ENCODE measurements at regions of chr22 and their contacts with region 1.

Region 1: DNA sequence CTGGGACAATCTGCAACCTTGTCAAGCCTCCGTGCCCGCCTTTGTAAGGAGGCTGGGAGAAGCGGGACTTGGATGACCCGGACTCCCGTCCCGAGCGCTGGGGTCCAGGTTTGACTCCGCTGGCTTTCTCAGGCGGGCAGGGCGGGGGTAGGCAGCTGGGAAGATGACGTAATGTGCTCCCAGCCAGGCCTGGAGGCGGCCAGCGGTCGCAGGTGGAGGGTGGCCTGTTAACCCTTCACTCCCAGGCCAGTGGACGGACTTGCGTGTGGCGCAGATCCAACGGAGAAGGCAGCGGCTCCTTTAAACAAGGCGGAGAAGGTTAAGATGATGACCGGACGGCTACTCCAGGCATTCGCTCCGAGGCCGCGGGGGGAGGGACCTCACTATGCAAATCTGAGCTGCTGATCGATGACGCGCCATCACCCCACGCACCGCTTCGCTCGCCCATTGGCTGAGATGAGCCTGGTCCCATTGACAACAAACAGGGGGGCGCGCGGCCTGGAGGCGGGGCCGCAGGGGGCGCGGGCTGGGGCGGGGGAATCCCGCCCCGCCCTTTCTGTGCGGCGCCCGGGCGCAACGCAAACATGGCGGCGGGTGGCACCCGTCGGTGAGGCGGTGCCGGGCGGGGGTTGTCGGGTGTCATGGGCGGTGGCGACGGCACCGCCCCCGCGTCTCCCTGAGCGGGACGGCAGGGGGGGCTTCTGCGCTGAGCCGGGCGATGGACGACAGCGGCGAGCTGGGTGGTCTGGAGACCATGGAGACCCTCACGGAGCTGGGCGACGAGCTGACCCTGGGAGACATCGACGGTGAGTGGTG is at the start of gene SREBF2:
- DNase-seq: peak; percentile 93 to 99 (median 97)
- ATAC-seq: peak; percentile 96
- H3K4me3 ChIP-seq: peak within 1 kb of the TSS; percentile 99
- H3K4me3 Mint-ChIP-seq: peak within 1 kb of the TSS; percentile 90 to 98 (median 95)
- H3K27ac ChIP-seq: peak within 1 kb of the TSS; percentile 97
- H3K27ac Mint-ChIP-seq: peak within 1 kb of the TSS; percentile 94 to 100 (median 99)
- H3K4me1 ChIP-seq: peaks cover 0 to 10% of the 10 kb centered on the region in 2 donors
- H3K4me1 Mint-ChIP-seq: peaks cover 15 to 54% (median 30%) of the 10 kb centered on the region in 7 donors
- H3K27me3 ChIP-seq: no peaks in the 10 kb centered on the region
- H3K27me3 Mint-ChIP-seq: peaks cover 0 to 2% (median 0%) of the 10 kb centered on the region in 5 donors
- total RNA-seq, gene SREBF2: 71.5 to 117 (median 101) TPM

Region 2: GRCh38 chr22:41780746-41781505 is 51.8 kb before region 1 on chr22:
- CTCF ChIA-PET with region 1: no interaction called
- POLR2A ChIA-PET with region 1: interaction called, 52 read pairs
- intact Hi-C with region 1: loop called (anchors 1 to 2 kb)
- DNase-seq: peak; percentile 64 to 99 (median 96)
- ATAC-seq: peak; percentile 97
- H3K4me3 ChIP-seq: peak overlapping the region; percentile 67
- H3K4me3 Mint-ChIP-seq: peak overlapping the region; percentile 77 to 93 (median 89)
- H3K27ac ChIP-seq: peak overlapping the region; percentile 88
- H3K27ac Mint-ChIP-seq: peak overlapping the region; percentile 98 to 100 (median 100)
- H3K4me1 ChIP-seq: peaks cover 19 to 25% of the 10 kb centered on the region in 2 donors
- H3K4me1 Mint-ChIP-seq: peaks cover 32 to 71% (median 51%) of the 10 kb centered on the region in 7 donors
- H3K27me3 ChIP-seq: no peaks in the 10 kb centered on the region
- H3K27me3 Mint-ChIP-seq: no peaks in the 10 kb centered on the region

Region 3: DNA sequence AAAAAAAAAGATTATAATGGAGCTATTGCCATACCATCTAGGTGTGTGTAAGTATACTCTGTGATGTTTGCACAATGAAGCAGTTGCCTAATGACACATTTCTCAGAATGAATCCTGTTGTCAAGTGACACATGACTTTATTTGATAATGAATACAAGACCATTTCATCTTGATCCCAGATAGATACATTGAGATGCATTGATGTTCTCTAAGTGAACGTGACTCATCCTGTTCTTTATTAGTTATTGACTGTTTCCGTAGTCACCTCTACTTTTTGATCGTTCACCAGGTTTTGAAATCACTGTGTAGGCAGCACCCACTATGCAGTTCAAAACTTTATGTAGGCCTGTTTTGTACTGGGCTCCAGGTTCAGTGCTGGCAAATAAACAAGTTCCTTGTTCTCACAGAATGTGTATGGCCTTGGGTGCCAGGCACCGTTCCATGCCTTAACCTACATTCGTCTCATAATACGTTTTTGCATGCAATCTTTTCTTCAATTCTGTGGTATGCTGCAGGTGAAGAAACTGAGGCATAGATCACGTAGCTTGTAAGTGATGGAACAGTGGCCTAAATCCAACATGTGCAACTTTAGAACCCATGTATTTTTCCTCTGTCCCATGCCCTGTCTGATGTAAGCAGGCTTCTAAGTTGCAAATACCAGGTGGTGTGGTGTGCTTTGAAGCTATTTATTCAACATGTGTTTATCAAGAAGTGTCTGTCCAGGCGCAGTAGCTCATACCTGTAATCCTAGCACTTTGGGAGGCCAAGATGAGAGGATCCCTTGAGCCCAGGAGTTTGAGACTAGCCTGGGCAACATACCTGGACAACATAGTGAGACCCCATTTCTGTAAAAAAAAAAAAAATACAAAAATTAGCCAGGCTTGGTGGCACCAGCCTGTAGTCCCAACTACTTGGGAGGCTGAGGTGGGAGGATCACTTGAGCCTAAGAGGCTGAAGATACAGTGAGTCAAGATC is 10.5 kb after region 1 on chr22:
- CTCF ChIA-PET with region 1: no interaction called
- POLR2A ChIA-PET with region 1: interaction called, 22 read pairs
- intact Hi-C with region 1: no loop called
- DNase-seq: peak in 1 of 9 donors; percentile 30
- ATAC-seq: no peak
- H3K4me3 ChIP-seq: no peak overlapping the region
- H3K4me3 Mint-ChIP-seq: peak overlapping the region in 1 of 10 donors; percentile 23
- H3K27ac ChIP-seq: no peak overlapping the region
- H3K27ac Mint-ChIP-seq: peak overlapping the region in 4 of 9 donors; percentile 2 to 60 (median 27)
- H3K4me1 ChIP-seq: peaks cover 2 to 13% of the 10 kb centered on the region in 2 donors
- H3K4me1 Mint-ChIP-seq: peaks cover 38 to 82% (median 71%) of the 10 kb centered on the region in 7 donors
- H3K27me3 ChIP-seq: no peaks in the 10 kb centered on the region
- H3K27me3 Mint-ChIP-seq: no peaks in the 10 kb centered on the region

Region 4: GRCh38 chr22:41888627-41889200 is 56.0 kb after region 1 on chr22:
- CTCF ChIA-PET with region 1: no interaction called
- POLR2A ChIA-PET with region 1: no interaction called
- intact Hi-C with region 1: no loop called
- DNase-seq: no peak
- ATAC-seq: no peak
- H3K4me3 ChIP-seq: no peak overlapping the region
- H3K4me3 Mint-ChIP-seq: no peak overlapping the region
- H3K27ac ChIP-seq: no peak overlapping the region
- H3K27ac Mint-ChIP-seq: no peak overlapping the region
- H3K4me1 ChIP-seq: no peaks in the 10 kb centered on the region
- H3K4me1 Mint-ChIP-seq: peaks cover 0 to 6% (median 0%) of the 10 kb centered on the region in 7 donors
- H3K27me3 ChIP-seq: no peaks in the 10 kb centered on the region
- H3K27me3 Mint-ChIP-seq: no peaks in the 10 kb centered on the region

Region 5: DNA sequence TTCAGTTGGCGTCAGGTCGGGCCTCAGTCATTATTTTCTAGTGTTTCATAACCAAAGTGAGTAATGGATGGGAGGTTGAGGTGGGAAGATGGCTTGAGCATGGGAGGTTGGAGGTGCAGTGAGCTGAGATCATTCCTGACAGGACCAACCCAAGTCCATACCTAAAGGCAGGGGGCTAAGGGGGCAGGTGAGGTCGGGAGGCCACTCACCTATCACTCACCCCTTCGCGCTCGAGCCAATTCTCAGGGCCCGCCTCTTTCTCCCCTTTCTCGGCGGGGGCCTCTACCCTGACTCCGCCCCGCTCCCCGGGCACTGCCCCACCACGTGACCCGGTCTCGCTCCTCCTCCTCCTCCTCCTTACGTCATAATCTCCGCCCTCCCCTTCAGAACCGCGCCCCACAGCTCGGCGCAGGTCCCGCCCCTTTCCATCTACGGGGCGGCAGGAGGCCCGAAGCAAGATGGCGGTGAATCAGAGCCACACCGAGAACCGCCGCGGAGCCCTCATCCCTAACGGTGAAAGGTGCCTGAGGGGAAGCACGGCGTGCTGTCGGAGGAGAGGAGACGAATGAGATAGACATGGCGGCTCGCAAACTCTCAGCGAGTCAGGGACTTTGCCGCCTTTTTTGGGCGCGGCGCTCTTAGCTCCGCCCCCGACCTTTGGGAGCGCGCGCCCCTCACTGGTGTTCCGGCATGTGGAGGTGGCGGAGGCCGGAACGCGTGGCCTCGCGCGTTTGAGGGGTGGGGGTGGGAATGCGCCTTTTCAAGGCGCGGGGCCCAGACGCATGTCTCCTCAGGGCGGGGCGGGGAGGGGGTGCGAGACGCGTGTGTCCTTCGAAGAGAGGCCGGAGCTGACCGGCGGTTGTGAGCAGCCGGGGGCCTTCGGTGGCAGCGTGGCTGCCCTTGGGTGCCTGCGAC is 165.9 kb after region 1 on chr22 and contains the start of gene WBP2NL:
- CTCF ChIA-PET with region 1: no interaction called
- POLR2A ChIA-PET with region 1: no interaction called
- intact Hi-C with region 1: loop called in 1 of 2 experiments (anchors 1 kb)
- DNase-seq: peak; percentile 75 to 92 (median 89)
- ATAC-seq: peak; percentile 99
- H3K4me3 ChIP-seq: peak within 1 kb of the TSS; percentile 76
- H3K4me3 Mint-ChIP-seq: peak within 1 kb of the TSS; percentile 91 to 100 (median 96)
- H3K27ac ChIP-seq: peak within 1 kb of the TSS; percentile 73
- H3K27ac Mint-ChIP-seq: peak within 1 kb of the TSS; percentile 91 to 99 (median 96)
- H3K4me1 ChIP-seq: peaks cover 6 to 7% of the 10 kb centered on the region in 2 donors
- H3K4me1 Mint-ChIP-seq: peaks cover 12 to 31% (median 22%) of the 10 kb centered on the region in 7 donors
- H3K27me3 ChIP-seq: no peaks in the 10 kb centered on the region
- H3K27me3 Mint-ChIP-seq: peaks cover 0 to 9% (median 0%) of the 10 kb centered on the region in 5 donors
- total RNA-seq, gene WBP2NL: 0.85 to 5.7 (median 3.2) TPM

Region 6: DNA sequence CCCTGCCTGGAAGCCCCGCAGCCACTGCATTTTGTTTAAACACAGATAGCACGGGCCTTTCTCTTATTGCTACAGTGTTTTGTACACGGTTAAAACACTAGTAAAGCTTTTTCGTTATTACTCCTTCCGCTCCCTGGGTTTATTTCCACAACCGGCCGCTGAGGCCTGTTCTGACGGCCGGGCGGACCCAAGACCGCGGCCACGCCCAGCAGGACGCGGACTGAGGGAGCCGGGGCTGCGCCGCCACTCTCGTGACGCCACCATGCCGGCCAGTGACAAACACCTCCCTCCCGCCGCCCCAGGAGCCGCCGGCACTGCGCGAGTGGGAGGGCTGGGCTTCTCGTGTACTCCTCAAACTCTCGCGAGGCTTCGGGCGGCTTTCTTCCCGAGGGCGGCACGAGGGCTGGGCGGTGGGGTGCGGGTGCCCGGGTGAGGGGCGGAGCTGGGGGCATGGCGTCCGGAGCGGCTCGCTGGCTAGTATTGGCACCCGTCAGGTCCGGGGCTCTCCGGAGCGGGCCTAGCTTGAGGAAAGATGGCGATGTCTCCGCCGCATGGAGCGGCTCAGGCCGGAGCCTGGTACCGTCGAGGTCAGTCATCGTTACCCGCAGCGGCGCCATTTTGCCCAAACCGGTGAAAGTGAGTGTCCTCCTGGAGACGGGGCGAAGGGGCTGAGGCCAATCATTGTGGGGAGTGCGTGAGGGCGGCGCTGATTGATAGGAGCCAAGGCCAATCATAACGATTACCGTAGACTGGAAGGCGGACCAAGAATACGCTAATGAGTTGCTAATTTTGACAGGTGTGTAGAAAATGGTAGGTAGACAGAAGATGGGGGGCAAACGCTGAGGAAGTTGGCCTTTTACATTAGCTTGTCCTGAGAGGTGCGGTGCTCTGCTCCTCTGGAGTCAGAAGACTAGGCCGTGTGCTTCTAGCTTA is 246.8 kb after region 1 on chr22 and contains the start of gene SMDT1:
- CTCF ChIA-PET with region 1: no interaction called
- POLR2A ChIA-PET with region 1: interaction called, 3 read pairs
- intact Hi-C with region 1: loop called in 1 of 2 experiments (anchors 10 kb)
- DNase-seq: peak; percentile 96 to 100 (median 99)
- ATAC-seq: peak; percentile 94
- H3K4me3 ChIP-seq: peak within 1 kb of the TSS; percentile 98
- H3K4me3 Mint-ChIP-seq: peak within 1 kb of the TSS; percentile 94 to 99 (median 96)
- H3K27ac ChIP-seq: peak within 1 kb of the TSS; percentile 97
- H3K27ac Mint-ChIP-seq: peak within 1 kb of the TSS; percentile 96 to 99 (median 99)
- H3K4me1 ChIP-seq: peaks cover 10 to 16% of the 10 kb centered on the region in 2 donors
- H3K4me1 Mint-ChIP-seq: peaks cover 9 to 52% (median 43%) of the 10 kb centered on the region in 7 donors
- H3K27me3 ChIP-seq: no peaks in the 10 kb centered on the region
- H3K27me3 Mint-ChIP-seq: no peaks in the 10 kb centered on the region
- total RNA-seq, gene SMDT1: 40.4 to 105 (median 98.8) TPM

Measured in naive thymus-derived CD4-positive, alpha-beta T cell (primary cell).